ENCODE measurements at regions of chr12 and their contacts with region 1.

Region 1: GRCh38 chr12:39990122-39991101 is 115.5 kb downstream of the SLC2A13 start:
- H3K4me3 Mint-ChIP-seq: no peak overlapping the region
- H3K27ac Mint-ChIP-seq: no peak overlapping the region
- H3K4me1 Mint-ChIP-seq: peaks cover 20% of the 10 kb centered on the region
- H3K27me3 Mint-ChIP-seq: no peaks in the 10 kb centered on the region

Region 2: DNA sequence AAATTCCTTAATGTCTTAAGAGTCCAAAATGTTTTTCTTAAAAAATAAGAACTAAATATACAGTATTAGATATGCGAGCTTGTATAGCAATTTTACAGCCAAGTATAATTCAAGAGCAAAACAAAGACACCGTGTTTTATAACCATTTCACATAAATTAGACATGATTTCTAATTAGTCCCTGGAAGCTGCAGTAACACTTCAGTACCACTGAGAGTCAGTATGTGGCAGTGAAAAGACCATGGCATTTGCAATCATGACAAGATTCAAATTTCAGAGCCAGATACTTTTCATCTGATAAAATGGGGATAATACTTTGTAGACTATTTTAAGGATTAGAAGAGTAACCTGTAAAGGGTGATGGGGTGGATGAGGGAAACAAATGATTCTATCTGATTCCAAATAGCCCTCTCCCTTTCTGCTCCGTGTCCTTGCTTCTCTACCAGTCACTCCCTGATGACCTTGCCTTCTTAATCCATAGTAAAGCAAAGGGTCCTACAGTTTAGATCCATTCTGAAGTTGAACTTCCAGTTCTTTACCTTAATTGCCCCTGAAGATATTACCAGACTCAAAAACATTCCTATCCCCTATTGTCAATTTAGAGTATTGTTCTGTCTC is 225.4 kb before region 1 on chr12:
- intact Hi-C with region 1: loop called (anchors 1 kb)
- H3K4me3 Mint-ChIP-seq: no peak overlapping the region
- H3K27ac Mint-ChIP-seq: no peak overlapping the region
- H3K4me1 Mint-ChIP-seq: no peaks in the 10 kb centered on the region
- H3K27me3 Mint-ChIP-seq: no peaks in the 10 kb centered on the region

Region 3: GRCh38 chr12:40063414-40063813 is 73.0 kb after region 1 on chr12:
- intact Hi-C with region 1: no loop called
- H3K4me3 Mint-ChIP-seq: no peak overlapping the region
- H3K27ac Mint-ChIP-seq: no peak overlapping the region
- H3K4me1 Mint-ChIP-seq: no peaks in the 10 kb centered on the region
- H3K27me3 Mint-ChIP-seq: no peaks in the 10 kb centered on the region